Common myeloid progenitor, CD34-positive (primary cell): ENCODE measurements at regions of chr4 and their contacts with region 1.

Region 1: DNA sequence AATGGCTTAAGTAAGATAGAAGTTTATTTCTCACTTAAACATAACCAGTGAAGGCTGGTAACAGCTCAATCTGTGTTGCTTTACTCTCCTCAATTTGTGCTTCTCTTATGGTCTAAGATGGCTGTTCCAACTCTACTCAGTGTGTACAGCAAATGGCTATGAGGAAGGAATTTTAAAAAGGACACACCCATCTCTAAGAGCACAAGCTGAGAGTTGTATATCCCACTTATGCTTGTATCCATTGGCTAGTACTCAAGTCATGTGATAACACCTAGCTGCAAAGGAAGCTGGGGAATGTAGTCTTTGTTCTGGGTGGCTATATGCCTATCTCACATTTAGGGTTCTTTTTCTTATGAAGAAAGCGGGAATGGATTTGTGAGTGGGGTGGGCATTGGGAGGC is 63.3 kb downstream of the GPAT3 start:
- DNase-seq: peak in 1 of 3 donors; percentile 59
- H3K4me3 ChIP-seq: no peak overlapping the region
- H3K27ac ChIP-seq: no peak overlapping the region
- H3K4me1 ChIP-seq: no peaks in the 10 kb centered on the region
- H3K27me3 ChIP-seq: no peaks in the 10 kb centered on the region

Region 2: DNA sequence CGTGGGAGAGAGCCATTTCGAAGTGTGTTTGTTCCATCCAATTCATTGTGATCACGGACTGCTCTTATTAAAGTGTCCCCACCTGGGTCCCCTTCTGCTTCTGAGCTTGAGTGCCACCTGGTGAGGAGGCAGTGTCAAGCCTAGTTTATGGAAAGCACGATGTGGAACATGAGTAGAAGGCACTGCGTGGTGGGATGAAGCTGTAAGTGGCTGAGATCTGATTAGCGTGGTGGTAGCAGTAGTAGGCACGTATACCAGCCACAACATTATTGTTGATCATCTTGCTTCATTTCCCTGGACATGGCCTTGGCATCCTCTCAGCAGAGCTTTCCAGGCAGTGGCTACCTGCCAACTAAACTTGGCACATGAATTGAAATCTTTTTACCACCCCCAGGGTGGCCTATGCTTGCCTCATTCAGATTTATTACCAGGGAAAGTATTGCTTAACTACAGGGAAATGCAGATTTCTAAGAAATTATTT is 16.9 kb before region 1 on chr4:
- CTCF ChIA-PET with region 1: interaction called, 26 read pairs
- POLR2A ChIA-PET with region 1: interaction called, 4 read pairs
- DNase-seq: peak; percentile 39 to 61 (median 60)
- H3K4me3 ChIP-seq: peak overlapping the region in 1 of 7 experiments; percentile 5
- H3K27ac ChIP-seq: peak overlapping the region in 1 of 2 experiments; percentile 9
- H3K4me1 ChIP-seq: peaks cover 0 to 3% (median under 1%) of the 10 kb centered on the region in 4 experiments
- H3K27me3 ChIP-seq: no peaks in the 10 kb centered on the region

Region 3: GRCh38 chr4:83618431-83618830 is 19.2 kb after region 1 on chr4:
- CTCF ChIA-PET with region 1: interaction called, 12 read pairs
- POLR2A ChIA-PET with region 1: interaction called, 3 read pairs
- DNase-seq: peak in 2 of 3 donors; percentile 19 to 40
- H3K4me3 ChIP-seq: peak overlapping the region in 1 of 7 experiments; percentile 35
- H3K27ac ChIP-seq: no peak overlapping the region
- H3K4me1 ChIP-seq: peaks cover 11 to 38% (median 24%) of the 10 kb centered on the region in 4 experiments
- H3K27me3 ChIP-seq: no peaks in the 10 kb centered on the region